Naive thymus-derived CD4-positive, alpha-beta T cell (primary cell): ENCODE measurements at regions of chr7 and their contacts with region 1.

Region 1: GRCh38 chr7:22488643-22489462 is 11.1 kb downstream of the STEAP1B start:
- DNase-seq: peak; percentile 26 to 67 (median 38)
- ATAC-seq: peak; percentile 85
- H3K4me3 ChIP-seq: no peak overlapping the region
- H3K4me3 Mint-ChIP-seq: no peak overlapping the region
- H3K27ac ChIP-seq: no peak overlapping the region
- H3K27ac Mint-ChIP-seq: no peak overlapping the region
- H3K4me1 ChIP-seq: no peaks in the 10 kb centered on the region
- H3K4me1 Mint-ChIP-seq: peaks cover 0 to 3% (median 0%) of the 10 kb centered on the region in 7 donors
- H3K27me3 ChIP-seq: no peaks in the 10 kb centered on the region
- H3K27me3 Mint-ChIP-seq: peaks cover 0 to 20% (median 9%) of the 10 kb centered on the region in 5 donors

Region 2: DNA sequence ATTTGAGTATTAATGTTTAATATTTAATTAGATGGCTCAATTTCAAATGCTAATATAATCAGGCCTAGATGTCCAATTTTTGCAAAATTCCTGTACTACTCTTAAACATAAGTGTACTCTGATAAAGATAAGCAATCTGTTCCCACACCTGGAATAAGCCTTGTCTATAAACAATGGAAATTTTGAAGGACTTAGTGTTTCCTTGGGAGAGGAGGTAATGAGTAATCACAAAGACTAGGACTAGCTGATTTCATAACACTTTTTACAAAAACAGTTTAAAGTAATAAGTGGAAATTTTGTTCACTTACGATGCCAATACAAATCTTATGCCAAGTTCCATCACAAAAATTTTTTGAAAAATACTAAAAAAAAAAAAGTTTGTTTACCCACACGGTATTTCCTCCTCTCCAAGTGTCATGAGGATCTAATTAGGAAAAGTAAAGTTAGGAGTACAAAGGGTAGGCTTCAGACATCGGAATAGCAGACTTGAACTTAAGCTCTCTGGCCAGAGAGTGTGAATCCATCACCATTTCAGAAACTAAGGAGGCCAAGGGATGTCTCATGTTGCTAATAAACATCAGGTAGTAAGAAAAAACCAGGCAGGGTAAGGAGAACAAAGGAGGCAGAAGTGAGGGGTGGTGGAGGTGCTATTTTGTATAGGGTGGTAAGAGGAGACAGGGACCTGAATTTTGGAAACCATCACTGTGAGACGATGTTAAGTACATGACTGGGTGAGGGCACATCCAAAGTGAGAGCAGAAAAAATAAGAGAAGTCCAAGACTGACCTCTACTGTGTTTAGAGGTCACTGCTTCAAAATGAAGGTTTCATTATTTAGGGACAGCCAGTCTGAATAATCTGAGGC is 193.2 kb before region 1 on chr7:
- CTCF ChIA-PET with region 1: no interaction called
- POLR2A ChIA-PET with region 1: no interaction called
- intact Hi-C with region 1: loop called in 1 of 2 experiments (anchors 10 kb)
- DNase-seq: no peak
- ATAC-seq: no peak
- H3K4me3 ChIP-seq: no peak overlapping the region
- H3K4me3 Mint-ChIP-seq: no peak overlapping the region
- H3K27ac ChIP-seq: no peak overlapping the region
- H3K27ac Mint-ChIP-seq: no peak overlapping the region
- H3K4me1 ChIP-seq: no peaks in the 10 kb centered on the region
- H3K4me1 Mint-ChIP-seq: peaks cover 0 to 12% (median 0%) of the 10 kb centered on the region in 7 donors
- H3K27me3 ChIP-seq: no peaks in the 10 kb centered on the region
- H3K27me3 Mint-ChIP-seq: peaks cover 0 to 29% (median 20%) of the 10 kb centered on the region in 5 donors

Region 3: GRCh38 chr7:22402250-22402649 is 86.6 kb before region 1 on chr7:
- CTCF ChIA-PET with region 1: no interaction called
- POLR2A ChIA-PET with region 1: no interaction called
- intact Hi-C with region 1: no loop called
- DNase-seq: no peak
- ATAC-seq: no peak
- H3K4me3 ChIP-seq: no peak overlapping the region
- H3K4me3 Mint-ChIP-seq: peak overlapping the region in 1 of 10 donors; percentile 18
- H3K27ac ChIP-seq: no peak overlapping the region
- H3K27ac Mint-ChIP-seq: no peak overlapping the region
- H3K4me1 ChIP-seq: peaks cover 0 to 5% of the 10 kb centered on the region in 2 donors
- H3K4me1 Mint-ChIP-seq: peaks cover 0 to 8% (median 4%) of the 10 kb centered on the region in 7 donors
- H3K27me3 ChIP-seq: no peaks in the 10 kb centered on the region
- H3K27me3 Mint-ChIP-seq: peaks cover 0 to under 1% (median 0%) of the 10 kb centered on the region in 5 donors

Region 4: DNA sequence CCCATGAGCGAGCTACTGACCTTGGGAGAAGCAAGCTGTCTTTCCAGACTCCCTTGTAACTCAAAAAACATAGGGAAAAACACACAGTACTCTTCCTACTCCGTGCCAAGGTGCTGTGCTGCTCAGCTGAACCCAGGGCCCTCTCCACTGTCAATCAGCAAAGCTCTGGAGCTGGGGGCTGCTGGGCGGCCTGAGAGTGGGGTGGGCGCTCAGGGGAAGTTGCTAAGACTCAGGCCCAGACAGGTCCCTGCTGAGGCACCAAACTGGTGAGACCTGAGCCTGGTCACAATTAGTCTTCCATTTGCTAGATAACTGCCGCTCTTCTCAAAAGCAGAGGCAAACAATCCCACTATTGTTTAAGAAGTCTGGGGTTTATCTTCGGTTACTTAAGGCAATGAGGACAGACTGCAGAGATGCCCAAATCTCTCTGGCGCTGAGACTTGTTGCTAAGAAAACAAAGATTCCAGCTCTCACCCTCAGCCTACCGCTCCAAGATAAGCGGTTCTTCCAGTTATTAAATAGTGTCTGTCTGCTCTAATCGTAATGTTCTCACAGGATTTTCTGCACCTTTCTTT is 10.9 kb before region 1 on chr7:
- CTCF ChIA-PET with region 1: no interaction called
- POLR2A ChIA-PET with region 1: no interaction called
- intact Hi-C with region 1: no loop called
- DNase-seq: no peak
- ATAC-seq: no peak
- H3K4me3 ChIP-seq: no peak overlapping the region
- H3K4me3 Mint-ChIP-seq: no peak overlapping the region
- H3K27ac ChIP-seq: no peak overlapping the region
- H3K27ac Mint-ChIP-seq: no peak overlapping the region
- H3K4me1 ChIP-seq: no peaks in the 10 kb centered on the region
- H3K4me1 Mint-ChIP-seq: peaks cover 0 to 10% (median 5%) of the 10 kb centered on the region in 7 donors
- H3K27me3 ChIP-seq: no peaks in the 10 kb centered on the region
- H3K27me3 Mint-ChIP-seq: peaks cover 0 to 9% (median 0%) of the 10 kb centered on the region in 5 donors

Region 5: GRCh38 chr7:22499044-22499443 is 10.2 kb after region 1 on chr7:
- CTCF ChIA-PET with region 1: interaction called, 3 read pairs
- POLR2A ChIA-PET with region 1: no interaction called
- intact Hi-C with region 1: loop called in 1 of 2 experiments (anchors 1 kb)
- DNase-seq: no peak
- ATAC-seq: no peak
- H3K4me3 ChIP-seq: no peak overlapping the region
- H3K4me3 Mint-ChIP-seq: peak overlapping the region in 1 of 10 donors; percentile 69
- H3K27ac ChIP-seq: no peak overlapping the region
- H3K27ac Mint-ChIP-seq: no peak overlapping the region
- H3K4me1 ChIP-seq: no peaks in the 10 kb centered on the region
- H3K4me1 Mint-ChIP-seq: peaks cover 0 to 7% (median 4%) of the 10 kb centered on the region in 7 donors
- H3K27me3 ChIP-seq: no peaks in the 10 kb centered on the region
- H3K27me3 Mint-ChIP-seq: peaks cover 2 to 39% (median 24%) of the 10 kb centered on the region in 5 donors

Region 6: GRCh38 chr7:22672846-22673652 is 184.2 kb after region 1 on chr7:
- CTCF ChIA-PET with region 1: no interaction called
- POLR2A ChIA-PET with region 1: no interaction called
- intact Hi-C with region 1: no loop called
- DNase-seq: no peak
- ATAC-seq: no peak
- H3K4me3 ChIP-seq: no peak overlapping the region
- H3K4me3 Mint-ChIP-seq: peak overlapping the region in 7 of 10 donors; percentile 7 to 68 (median 37)
- H3K27ac ChIP-seq: no peak overlapping the region
- H3K27ac Mint-ChIP-seq: peak overlapping the region; percentile 14 to 88 (median 78)
- H3K4me1 ChIP-seq: peaks cover 18 to 54% of the 10 kb centered on the region in 2 donors
- H3K4me1 Mint-ChIP-seq: peaks cover 43 to 68% (median 65%) of the 10 kb centered on the region in 7 donors
- H3K27me3 ChIP-seq: no peaks in the 10 kb centered on the region
- H3K27me3 Mint-ChIP-seq: peaks cover 0 to 13% (median 0%) of the 10 kb centered on the region in 5 donors

Region 7: GRCh38 chr7:23494009-23494408 is 1005.2 kb after region 1 on chr7:
- CTCF ChIA-PET with region 1: no interaction called
- POLR2A ChIA-PET with region 1: no interaction called
- intact Hi-C with region 1: no loop called
- DNase-seq: no peak
- ATAC-seq: no peak
- H3K4me3 ChIP-seq: no peak overlapping the region
- H3K4me3 Mint-ChIP-seq: no peak overlapping the region
- H3K27ac ChIP-seq: no peak overlapping the region
- H3K27ac Mint-ChIP-seq: no peak overlapping the region
- H3K4me1 ChIP-seq: peaks cover 4 to 6% of the 10 kb centered on the region in 2 donors
- H3K4me1 Mint-ChIP-seq: peaks cover 3 to 13% (median 10%) of the 10 kb centered on the region in 7 donors
- H3K27me3 ChIP-seq: no peaks in the 10 kb centered on the region
- H3K27me3 Mint-ChIP-seq: no peaks in the 10 kb centered on the region